Heart left ventricle (tissue), 16 donors: ENCODE measurements at regions of chr7 and their contacts with region 1.

Region 1: GRCh38 chr7:30814700-30815387 is 43.6 kb downstream of the MINDY4 start:
- DNase-seq: peak in 2 of 5 donors; percentile 45 to 60
- ATAC-seq: peak in 3 of 4 donors; percentile 22 to 65 (median 41)
- H3K4me3 ChIP-seq: no peak overlapping the region
- H3K27ac ChIP-seq: peak overlapping the region; percentile 66 to 88 (median 81)
- H3K4me1 ChIP-seq: peaks cover 6 to 57% (median 44%) of the 10 kb centered on the region in 12 donors
- H3K27me3 ChIP-seq: no peaks in the 10 kb centered on the region
- CTCF ChIP-seq: no peak
- POLR2A ChIP-seq: no peak

Region 2: DNA sequence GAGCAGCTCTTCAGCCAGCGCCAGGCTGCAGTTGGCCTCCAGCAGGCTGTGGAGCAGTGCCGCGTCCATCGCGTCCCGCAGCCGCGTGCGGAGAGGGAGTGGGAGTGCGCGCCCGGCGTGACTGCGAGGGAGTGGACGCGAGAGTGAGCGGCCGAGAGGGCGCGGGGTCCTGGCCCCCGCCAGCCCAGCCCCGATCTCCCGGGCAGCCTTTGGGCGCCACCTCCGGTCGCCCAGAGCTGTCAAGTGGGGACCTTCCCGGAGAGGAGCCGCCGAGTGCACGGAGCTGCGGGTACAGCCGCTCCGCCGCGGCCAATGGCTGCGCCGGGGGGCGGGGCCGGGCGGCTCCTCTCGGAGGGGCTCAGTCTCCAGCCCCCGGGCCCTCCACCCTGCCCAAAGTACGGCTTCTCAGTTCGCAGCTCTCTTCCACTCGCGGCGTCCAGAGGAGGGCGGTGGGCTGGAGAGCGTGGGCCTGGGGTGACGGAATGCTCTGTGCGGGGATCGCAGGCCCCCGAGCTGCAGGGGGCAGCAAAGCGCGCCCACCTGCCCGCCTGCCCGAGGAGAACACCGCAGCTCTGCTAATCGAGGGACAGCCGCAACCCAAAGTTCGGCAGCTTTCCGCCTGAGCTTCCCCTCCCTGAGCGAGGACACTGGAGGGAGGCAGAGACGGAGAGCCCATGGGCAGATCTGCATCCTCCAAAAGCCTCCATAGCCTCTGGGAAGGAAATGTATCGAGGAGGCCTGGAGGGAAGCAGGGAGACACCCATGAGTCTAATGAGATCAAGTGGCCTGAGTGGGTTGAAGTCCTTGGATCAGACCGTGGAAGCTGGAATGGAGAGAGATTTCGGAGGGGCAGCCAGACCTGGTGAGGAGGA is 132.4 kb before region 1 on chr7 and contains the start of gene CRHR2:
- intact Hi-C with region 1: no loop called
- DNase-seq: peak in 3 of 5 donors; percentile 33 to 65 (median 36)
- ATAC-seq: peak; percentile 27 to 83 (median 66)
- H3K4me3 ChIP-seq: peak within 1 kb of the TSS; percentile 27 to 67 (median 56)
- H3K27ac ChIP-seq: peak within 1 kb of the TSS in 2 of 12 donors; percentile 34 to 53
- H3K4me1 ChIP-seq: peaks cover 4 to 22% (median 12%) of the 10 kb centered on the region in 12 donors
- H3K27me3 ChIP-seq: peaks cover 13 to 53% (median 32%) of the 10 kb centered on the region in 9 donors
- CTCF ChIP-seq: peak; percentile 33 to 71 (median 56)
- POLR2A ChIP-seq: no peak
- total RNA-seq, gene CRHR2: 0.28 to 1.6 (median 0.71) TPM in 8 of 9 donors, not detected in the other

Region 3: DNA sequence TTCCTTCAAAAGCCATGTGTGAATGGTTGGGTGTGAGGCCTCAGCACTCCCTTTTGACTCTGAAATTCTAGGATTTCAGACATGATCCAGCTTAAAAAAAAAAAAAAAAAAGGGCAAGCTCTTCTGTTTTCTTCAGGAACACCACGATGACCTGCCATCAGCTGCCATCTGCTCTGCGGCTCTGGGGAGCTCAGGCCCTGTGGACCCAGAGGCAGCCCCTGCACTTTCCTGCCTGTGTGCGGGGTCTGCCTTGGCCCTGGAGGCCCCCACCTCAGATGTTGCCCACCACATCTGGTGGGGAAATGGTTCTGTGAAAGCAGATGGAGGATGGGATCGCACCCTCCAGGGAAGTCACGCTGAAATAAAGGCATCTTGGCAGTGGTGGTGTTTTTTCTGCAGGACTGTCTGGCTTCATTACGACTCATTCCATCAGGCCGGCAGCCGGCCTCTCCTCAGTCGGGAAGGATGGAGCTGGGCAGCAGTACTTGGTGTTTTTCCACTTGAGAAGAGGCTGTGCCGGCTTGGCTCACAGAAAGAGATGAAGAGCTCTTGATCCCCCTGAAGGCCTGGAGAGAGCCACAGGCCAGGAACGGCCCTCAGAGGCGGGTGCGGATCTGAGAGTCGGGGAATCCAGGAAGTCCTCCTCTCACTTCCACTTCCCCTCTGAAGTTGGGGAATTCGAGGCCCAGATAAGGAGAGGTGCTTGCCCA is 30.7 kb after region 1 on chr7:
- intact Hi-C with region 1: no loop called
- DNase-seq: peak; percentile 40 to 73 (median 53)
- ATAC-seq: peak; percentile 27 to 71 (median 48)
- H3K4me3 ChIP-seq: no peak overlapping the region
- H3K27ac ChIP-seq: peak overlapping the region; percentile 35 to 88 (median 68)
- H3K4me1 ChIP-seq: peaks cover 0 to 73% (median 32%) of the 10 kb centered on the region in 12 donors
- H3K27me3 ChIP-seq: no peaks in the 10 kb centered on the region
- CTCF ChIP-seq: no peak
- POLR2A ChIP-seq: no peak

Region 4: DNA sequence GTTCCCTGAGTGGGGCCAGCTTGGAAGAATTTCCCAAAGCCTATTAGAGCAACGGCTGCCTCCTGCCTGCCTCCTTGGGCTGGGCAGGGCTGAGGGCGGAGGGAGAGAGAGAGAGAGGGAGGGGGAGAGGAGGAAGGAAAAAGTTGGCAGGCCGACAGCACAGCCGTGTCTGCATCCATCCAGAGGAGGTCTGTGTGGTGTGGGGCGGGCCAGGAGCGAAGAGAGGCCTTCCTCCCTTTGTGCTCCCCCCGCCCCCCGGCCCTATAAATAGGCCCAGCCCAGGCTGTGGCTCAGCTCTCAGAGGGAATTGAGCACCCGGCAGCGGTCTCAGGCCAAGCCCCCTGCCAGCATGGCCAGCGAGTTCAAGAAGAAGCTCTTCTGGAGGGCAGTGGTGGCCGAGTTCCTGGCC is 96.7 kb after region 1 on chr7 and contains the start of gene AQP1:
- intact Hi-C with region 1: loop called in 6 of 10 experiments (anchors 5 to 10 kb)
- DNase-seq: peak; percentile 87 to 94 (median 91)
- ATAC-seq: peak; percentile 67 to 74 (median 70)
- H3K4me3 ChIP-seq: peak within 1 kb of the TSS; percentile 42 to 82 (median 61)
- H3K27ac ChIP-seq: peak within 1 kb of the TSS; percentile 73 to 94 (median 82)
- H3K4me1 ChIP-seq: peaks cover 11 to 98% (median 70%) of the 10 kb centered on the region in 12 donors
- H3K27me3 ChIP-seq: no peaks in the 10 kb centered on the region
- CTCF ChIP-seq: peak in 3 of 12 donors; percentile 4 to 39 (median 34)
- POLR2A ChIP-seq: peak; percentile 64 to 84
- total RNA-seq, gene AQP1: 113 to 420 (median 206) TPM

Region 5: DNA sequence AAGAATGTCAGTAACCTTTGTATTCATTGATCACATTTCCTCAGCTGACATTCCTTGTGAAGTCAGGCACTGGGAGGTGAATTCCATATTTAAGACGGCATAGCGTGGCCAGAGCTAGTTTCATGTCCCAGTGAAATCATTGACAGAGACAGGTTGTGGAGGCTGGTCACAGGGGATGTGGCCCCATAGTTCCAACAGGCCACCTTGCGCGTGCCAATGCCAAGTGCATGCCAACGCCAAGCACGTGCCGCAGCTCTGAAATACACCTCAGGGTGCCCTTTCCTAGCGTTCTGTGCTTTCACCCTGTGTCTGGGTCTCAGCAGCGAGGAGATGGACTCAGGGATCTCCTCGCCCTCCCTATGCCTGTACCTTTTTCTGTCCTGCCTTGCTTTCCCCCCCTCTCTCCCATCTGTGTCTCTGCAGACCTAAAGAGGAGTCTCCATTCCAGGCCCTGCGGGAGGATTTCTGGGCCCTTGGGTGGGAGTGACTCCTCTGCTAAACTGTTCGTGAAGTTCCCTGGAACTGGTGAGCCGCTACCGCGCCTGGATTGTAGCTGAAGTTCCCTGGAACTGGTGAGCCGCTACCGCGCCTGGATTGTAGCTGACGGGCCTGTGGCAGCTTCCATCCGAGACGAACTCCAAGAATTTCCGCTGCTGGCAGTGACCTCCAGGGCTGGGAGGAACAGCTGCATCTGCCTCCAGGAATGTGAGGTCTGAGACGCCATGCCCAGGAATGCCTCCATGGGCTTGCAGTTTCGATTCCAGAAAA is 116.5 kb after region 1 on chr7:
- intact Hi-C with region 1: no loop called
- DNase-seq: peak in 4 of 5 donors; percentile 47 to 76 (median 56)
- ATAC-seq: peak; percentile 2 to 51 (median 29)
- H3K4me3 ChIP-seq: peak overlapping the region in 1 of 12 donors; percentile 4
- H3K27ac ChIP-seq: peak overlapping the region in 11 of 12 donors; percentile 42 to 67 (median 58)
- H3K4me1 ChIP-seq: peaks cover 0 to 56% (median 29%) of the 10 kb centered on the region in 12 donors
- H3K27me3 ChIP-seq: no peaks in the 10 kb centered on the region
- CTCF ChIP-seq: no peak
- POLR2A ChIP-seq: no peak